ENCODE measurements at regions of chr4 and their contacts with region 1.

Region 1: DNA sequence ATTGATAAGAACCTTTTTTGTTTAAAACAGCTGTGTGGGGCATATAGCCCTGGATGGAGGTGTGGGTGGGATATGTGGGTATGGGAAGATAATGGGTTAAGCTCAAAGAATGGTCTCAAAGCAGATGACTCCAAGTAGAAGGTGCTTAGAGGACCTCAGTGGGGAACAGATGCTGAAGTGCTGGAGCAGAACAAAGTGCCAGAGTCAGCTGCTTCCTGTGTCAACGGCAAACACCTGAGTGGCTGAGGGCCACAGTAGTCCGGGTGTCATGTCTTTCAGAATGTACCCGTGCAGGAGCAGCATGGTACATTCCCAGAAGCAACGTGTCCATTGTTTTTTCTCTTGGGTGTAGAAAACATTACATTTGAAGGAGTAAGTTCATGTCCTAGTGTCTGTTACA is 210.6 kb downstream of the CCNG2 start:
- DNase-seq: no peak
- H3K4me3 Mint-ChIP-seq: no peak overlapping the region
- H3K27ac Mint-ChIP-seq: no peak overlapping the region
- H3K4me1 Mint-ChIP-seq: peaks cover 2% of the 10 kb centered on the region
- H3K27me3 Mint-ChIP-seq: peaks cover 8% of the 10 kb centered on the region

Region 2: DNA sequence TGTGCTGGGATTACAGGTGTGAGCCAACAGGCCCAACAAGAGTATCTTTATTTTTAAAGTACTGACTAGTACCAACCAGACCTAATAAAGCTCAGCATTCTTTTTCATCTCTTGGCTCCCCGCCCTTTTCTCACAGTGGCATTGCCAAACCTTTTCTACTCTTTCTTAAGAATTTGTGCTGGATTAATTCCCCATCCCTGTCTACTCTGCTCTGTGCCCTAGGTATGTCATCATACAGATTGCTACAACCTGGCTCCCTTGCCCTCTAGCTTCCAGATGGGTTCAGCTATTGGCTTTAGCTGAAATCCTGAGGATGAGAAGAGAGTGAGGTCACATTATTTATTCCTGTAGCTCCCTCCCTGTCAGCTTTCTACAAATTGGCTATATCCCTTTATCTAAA is 256.9 kb before region 1 on chr4:
- intact Hi-C with region 1: no loop called
- DNase-seq: no peak
- H3K4me3 Mint-ChIP-seq: no peak overlapping the region
- H3K27ac Mint-ChIP-seq: no peak overlapping the region
- H3K4me1 Mint-ChIP-seq: no peaks in the 10 kb centered on the region
- H3K27me3 Mint-ChIP-seq: peaks cover 28% of the 10 kb centered on the region

Region 3: GRCh38 chr4:77433418-77433733 is 65.7 kb after region 1 on chr4:
- intact Hi-C with region 1: loop called (anchors 2 kb)
- DNase-seq: peak; percentile 80
- H3K4me3 Mint-ChIP-seq: no peak overlapping the region
- H3K27ac Mint-ChIP-seq: no peak overlapping the region
- H3K4me1 Mint-ChIP-seq: peaks cover 8% of the 10 kb centered on the region
- H3K27me3 Mint-ChIP-seq: no peaks in the 10 kb centered on the region

Region 4: DNA sequence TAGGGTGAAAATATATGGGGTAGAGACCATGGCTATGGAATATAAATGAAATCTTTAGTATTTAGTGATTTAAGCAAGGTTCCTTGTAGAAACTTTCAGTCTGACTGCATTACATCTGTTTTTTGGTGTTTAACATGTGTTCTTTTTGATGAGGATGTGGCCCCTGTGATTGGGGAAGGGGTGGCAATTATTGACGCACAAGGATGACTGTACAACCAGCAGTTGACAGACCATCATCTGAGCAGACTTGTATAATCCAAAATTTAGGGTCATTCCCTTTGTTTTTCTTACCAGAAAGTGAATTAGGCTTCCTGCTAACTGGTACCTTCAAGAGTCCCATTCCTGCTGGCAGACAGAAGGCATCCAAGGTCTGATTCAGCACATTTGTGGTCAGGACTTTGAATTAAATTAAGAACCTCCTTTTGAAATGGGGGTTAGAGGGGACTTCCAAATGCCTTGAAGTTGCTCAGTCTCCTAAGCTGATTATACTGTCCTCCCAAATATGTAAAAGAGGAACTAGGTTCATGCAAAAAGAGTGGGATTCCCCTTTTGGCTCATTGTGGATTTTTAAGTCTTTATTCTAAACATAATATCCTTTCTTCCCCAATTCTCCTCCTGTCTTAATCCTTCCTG is 125.6 kb after region 1 on chr4:
- intact Hi-C with region 1: no loop called
- DNase-seq: no peak
- H3K4me3 Mint-ChIP-seq: no peak overlapping the region
- H3K27ac Mint-ChIP-seq: no peak overlapping the region
- H3K4me1 Mint-ChIP-seq: no peaks in the 10 kb centered on the region
- H3K27me3 Mint-ChIP-seq: peaks cover 2% of the 10 kb centered on the region